GM10248 (cell line): ENCODE measurements at regions of chr16 and their contacts with region 1.

Region 1: GRCh38 chr16:14529010-14529669 is 100.9 kb downstream of the PARN start:
- DNase-seq: peak; percentile 64
- CTCF ChIP-seq: peak; percentile 76

Region 2: DNA sequence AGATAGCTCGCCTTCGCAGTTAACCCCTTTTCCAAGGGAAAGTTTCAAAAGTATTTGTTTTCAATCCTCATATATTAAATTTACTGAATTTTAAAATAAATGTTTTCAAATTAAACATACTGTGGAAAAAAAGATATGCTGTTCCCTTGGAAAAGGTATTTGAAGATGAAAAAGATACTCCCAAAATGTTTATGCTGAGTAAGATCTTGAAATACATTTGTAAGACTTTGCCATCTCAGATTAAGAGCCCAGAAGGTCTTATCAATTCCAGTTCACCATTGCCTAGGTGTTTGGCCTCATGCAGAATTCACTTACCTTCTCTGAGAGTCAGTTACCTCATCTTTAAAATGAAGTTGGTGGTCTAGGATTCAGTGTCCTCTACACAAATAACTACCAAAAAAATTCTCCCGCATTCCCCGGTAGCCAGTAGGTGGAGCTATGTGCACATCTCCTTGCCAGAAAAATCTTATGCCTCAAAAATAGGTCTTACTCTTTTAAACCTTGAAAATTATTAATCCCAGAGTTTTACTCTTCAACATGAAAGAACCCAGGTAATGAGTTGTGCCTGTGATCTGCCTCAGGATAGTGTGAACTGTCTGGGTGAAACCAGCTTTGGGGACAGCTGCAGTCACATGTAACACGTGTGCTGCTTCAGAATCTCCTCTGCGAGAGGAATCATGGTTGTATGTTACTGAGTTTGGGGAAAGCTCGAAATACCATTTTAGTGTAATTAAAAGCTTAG is 279.7 kb before region 1 on chr16:
- CTCF ChIA-PET with region 1: interaction called, 24 read pairs
- POLR2A ChIA-PET with region 1: no interaction called
- DNase-seq: peak; percentile 51
- CTCF ChIP-seq: peak; percentile 79

Region 3: DNA sequence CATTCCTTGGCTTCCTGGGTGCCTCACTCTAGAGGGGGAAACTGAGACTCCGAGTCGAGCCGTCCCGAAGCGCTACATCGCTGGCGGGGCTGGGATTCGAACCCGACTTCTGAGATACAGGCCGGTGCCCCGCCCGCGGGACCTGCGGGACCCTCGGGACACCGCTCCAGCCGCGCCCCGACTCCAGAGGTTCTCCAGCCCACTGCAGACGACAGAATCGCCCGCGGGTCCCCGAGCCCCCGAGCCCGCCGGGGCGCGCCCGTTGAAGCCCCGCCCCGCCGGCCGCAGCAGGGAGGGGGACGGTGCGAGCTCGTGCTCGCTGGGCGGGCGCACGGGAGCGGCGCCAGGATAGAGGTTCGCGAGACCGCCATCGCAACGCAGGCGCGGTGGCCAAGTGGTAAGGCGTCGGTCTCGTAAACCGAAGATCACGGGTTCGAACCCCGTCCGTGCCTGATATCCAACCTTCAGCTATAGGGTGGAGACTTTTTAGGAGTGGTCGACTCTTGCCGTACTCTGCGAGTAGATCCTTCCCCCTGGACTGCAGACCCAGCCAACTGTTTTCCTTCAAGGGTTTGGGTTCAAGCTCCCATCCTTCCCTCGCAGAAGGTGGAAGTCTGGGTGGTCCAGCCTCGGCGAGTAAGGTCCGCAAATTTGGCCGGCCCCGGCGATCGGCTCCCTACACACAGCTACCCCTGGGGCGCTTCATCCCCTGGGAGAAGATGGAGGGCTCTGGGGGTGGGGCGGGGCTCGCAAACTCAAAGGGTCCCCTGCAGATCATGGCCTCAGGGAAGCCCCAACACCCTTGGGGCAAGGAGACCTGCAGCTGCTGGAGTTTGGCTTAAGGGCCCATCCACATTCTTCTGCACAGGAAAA is 243.4 kb before region 1 on chr16:
- CTCF ChIA-PET with region 1: interaction called, 12 read pairs
- POLR2A ChIA-PET with region 1: interaction called, 3 read pairs
- DNase-seq: peak; percentile 95
- CTCF ChIP-seq: no peak

Region 4: DNA sequence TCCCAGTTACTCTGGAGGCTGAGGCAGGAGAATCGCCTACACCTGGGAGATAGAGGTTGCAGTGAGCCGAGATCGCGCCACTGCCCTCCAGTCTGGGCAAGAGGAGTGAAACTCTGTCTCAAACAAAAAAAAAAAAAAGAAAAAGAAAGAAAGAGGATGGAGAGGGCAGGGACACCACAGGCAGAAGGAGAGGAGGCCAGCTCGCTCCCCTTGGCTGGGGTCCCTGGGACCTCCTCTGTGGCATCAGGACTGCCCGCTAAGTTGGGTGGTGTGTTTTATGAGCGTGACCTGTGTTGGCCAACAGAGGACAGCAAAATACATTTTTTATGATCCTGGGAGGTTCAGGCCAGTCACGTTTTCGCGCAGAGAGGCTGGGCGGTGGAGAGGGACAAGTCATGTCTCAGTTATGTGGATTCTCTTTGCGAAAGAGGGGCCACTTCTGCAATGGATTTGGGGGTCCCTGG is 228.4 kb before region 1 on chr16:
- CTCF ChIA-PET with region 1: interaction called, 20 read pairs
- POLR2A ChIA-PET with region 1: no interaction called
- DNase-seq: peak; percentile 75
- CTCF ChIP-seq: peak; percentile 87

Region 5: GRCh38 chr16:14510939-14511799 is 18.0 kb before region 1 on chr16:
- CTCF ChIA-PET with region 1: interaction called, 16 read pairs
- POLR2A ChIA-PET with region 1: no interaction called
- DNase-seq: no peak
- CTCF ChIP-seq: no peak

Region 6: DNA sequence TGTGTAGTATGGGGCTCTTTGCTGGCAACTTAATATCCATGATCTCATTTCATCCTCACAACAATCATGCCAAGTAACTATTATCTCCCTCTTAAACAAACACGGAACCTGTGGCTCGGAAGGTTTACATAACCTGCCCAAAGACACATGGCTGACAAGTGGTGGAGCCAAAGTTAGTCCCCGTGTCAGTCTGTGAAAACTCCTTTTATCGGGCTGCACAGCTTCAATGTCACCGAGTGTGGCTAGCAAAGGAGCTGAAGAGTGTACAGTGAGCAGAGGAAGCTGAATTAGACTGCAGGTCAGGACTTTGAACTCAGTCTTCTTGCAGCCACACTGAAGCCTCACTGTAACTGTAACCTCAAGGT is 20.6 kb after region 1 on chr16:
- CTCF ChIA-PET with region 1: no interaction called
- POLR2A ChIA-PET with region 1: no interaction called
- DNase-seq: no peak
- CTCF ChIP-seq: no peak